ENCODE measurements at regions of chr1 and their contacts with region 1.

Region 1: GRCh38 chr1:150363426-150364230 is at the start of gene RPRD2:
- DNase-seq: peak; percentile 100
- ATAC-seq: peak; percentile 91
- H3K4me3 ChIP-seq: peak within 1 kb of the TSS; percentile 97
- H3K27ac ChIP-seq: peak within 1 kb of the TSS; percentile 85
- H3K4me1 ChIP-seq: peaks cover 13% of the 10 kb centered on the region
- H3K27me3 ChIP-seq: no peaks in the 10 kb centered on the region
- CTCF ChIP-seq: no peak
- total RNA-seq, gene RPRD2: 12.5 and 12.6 TPM in 2 replicates

Region 2: DNA sequence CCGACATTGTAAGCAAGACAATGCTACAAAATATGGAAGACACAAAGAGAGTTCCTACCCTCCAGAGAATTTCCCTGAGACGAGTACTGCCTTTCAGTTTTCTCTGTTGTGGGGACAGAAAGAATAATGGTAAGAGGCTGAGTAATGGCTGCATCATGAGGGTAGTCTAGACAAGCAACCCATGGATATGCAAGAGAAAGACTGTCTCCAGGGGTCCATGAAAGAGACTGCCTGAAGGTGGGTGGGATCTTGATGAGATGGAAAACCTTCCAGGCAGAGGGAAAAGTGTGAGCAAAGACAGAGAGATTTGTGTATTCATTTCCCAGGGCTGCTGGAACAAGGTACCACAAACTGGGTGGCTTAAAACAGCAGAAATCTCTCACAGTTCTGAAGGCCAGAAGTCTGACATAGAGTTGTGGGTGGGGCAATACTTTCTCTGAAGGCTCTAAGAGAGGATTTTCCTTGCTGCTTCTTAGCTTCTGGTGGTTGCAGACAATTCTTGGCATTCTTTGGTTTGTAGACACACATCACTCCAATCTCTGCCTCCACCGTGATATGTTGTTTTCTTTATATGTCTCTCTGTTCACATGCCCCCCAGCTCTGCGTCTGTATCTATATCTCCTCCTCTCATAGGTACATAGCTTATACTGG is 169.1 kb before region 1 on chr1:
- CTCF ChIA-PET with region 1: no interaction called
- POLR2A ChIA-PET with region 1: no interaction called
- intact Hi-C with region 1: no loop called
- DNase-seq: no peak
- ATAC-seq: no peak
- H3K4me3 ChIP-seq: no peak overlapping the region
- H3K27ac ChIP-seq: no peak overlapping the region
- H3K4me1 ChIP-seq: peaks cover 8% of the 10 kb centered on the region
- H3K27me3 ChIP-seq: no peaks in the 10 kb centered on the region
- CTCF ChIP-seq: no peak

Region 3: GRCh38 chr1:150429805-150430204 is 66.2 kb after region 1 on chr1:
- CTCF ChIA-PET with region 1: no interaction called
- POLR2A ChIA-PET with region 1: interaction called, 8 read pairs
- intact Hi-C with region 1: loop called (anchors 5 kb)
- DNase-seq: peak; percentile 49
- ATAC-seq: peak; percentile 68
- H3K4me3 ChIP-seq: no peak overlapping the region
- H3K27ac ChIP-seq: no peak overlapping the region
- H3K4me1 ChIP-seq: no peaks in the 10 kb centered on the region
- H3K27me3 ChIP-seq: no peaks in the 10 kb centered on the region
- CTCF ChIP-seq: peak; percentile 65

Region 4: DNA sequence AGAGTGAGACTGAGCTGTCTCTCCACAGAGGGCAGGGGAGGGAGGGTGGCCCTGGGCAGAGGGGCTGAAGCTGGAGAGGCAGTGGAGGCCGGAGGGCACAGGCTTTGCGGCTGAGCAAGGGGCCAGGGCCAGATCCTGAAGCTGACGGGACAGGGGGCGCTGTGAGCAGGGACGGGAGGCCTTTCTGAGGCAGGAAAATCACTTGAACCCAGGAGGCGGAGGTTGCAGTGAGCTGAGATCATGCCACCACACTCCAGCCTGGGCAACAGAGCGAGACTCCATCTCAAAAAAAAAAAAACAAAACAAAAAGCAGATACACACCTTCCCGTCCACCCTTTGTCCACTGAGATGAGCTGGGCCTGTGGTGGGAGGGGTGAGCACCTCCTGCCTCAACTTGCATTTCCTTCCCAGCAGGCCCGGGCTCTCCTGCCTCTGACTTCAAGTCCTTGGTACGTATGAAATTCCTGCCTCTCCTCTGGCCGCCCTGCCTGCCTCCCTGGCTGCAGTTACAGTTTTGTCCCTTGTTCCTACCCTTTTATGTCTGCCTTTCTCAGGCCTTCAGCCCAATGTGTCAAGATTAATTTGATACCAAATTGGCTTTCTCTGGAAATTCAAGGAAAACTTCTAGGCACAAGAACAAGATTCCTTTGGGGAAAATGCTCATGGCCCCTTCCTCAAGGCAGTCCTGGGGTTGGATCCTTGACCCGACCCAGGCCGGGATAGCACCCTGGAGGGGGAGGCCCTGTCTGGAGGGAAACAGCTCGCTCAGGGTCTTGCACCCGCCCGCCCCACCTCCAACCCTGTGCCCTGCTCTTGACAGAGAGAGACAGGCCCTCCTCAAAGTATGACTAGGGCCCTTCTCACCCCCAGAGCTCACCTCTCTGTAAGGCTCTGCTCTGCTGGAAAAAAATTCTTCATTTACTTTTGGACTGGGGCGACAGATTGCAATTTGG is 174.4 kb after region 1 on chr1:
- CTCF ChIA-PET with region 1: no interaction called
- POLR2A ChIA-PET with region 1: no interaction called
- intact Hi-C with region 1: loop called (anchors 10 kb)
- DNase-seq: no peak
- ATAC-seq: no peak
- H3K4me3 ChIP-seq: no peak overlapping the region
- H3K27ac ChIP-seq: no peak overlapping the region
- H3K4me1 ChIP-seq: no peaks in the 10 kb centered on the region
- H3K27me3 ChIP-seq: no peaks in the 10 kb centered on the region
- CTCF ChIP-seq: peak; percentile 27; the same call in 1 of the 2 replicates

Measured in PC-3 (cell line).